HepG2 (cell line): ENCODE measurements at regions of chr1 and their contacts with region 1.

Region 1: GRCh38 chr1:39816415-39817090 is 27.9 kb upstream of the BMP8B start:
- DNase-seq: peak; percentile 49
- ATAC-seq: peak; percentile 82
- H3K4me3 ChIP-seq: no peak overlapping the region
- H3K27ac ChIP-seq: no peak overlapping the region
- H3K4me1 ChIP-seq: peaks cover 10% of the 10 kb centered on the region; the same call in 1 of the 2 replicates
- H3K27me3 ChIP-seq: peaks cover 1 to 13% of the 10 kb centered on the region in 2 experiments; a peak in 2 of 5 replicates
- CTCF ChIP-seq: peak; percentile 92
- EP300 ChIP-seq: no peak
- POLR2A ChIP-seq: no peak
- RAD21 ChIP-seq: peak; percentile 91

Region 2: DNA sequence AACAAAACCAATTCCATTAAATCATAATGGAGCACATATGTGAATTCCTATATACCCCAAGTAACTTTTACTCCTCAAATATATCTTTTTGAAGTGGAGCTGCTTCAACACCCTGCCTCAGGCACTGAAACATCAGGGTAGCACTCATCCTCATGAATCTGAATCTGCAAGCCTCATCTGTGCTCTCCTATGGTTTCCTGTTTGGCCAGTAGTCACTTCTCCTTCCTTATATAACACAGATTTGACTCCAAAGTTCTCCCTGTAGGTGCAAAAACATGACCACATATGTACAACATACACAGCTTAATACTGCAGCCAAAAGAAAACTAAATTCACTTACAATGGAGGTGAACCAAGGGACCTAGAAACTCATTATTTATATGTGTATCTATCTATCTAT is 59.6 kb after region 1 on chr1:
- CTCF ChIA-PET with region 1: no interaction called
- POLR2A ChIA-PET with region 1: no interaction called
- in situ Hi-C with region 1: no loop called
- intact Hi-C with region 1: no loop called
- DNase-seq: no peak
- ATAC-seq: no peak
- H3K4me3 ChIP-seq: no peak overlapping the region
- H3K27ac ChIP-seq: no peak overlapping the region
- H3K4me1 ChIP-seq: peaks cover 59% of the 10 kb centered on the region
- H3K27me3 ChIP-seq: no peaks in the 10 kb centered on the region
- CTCF ChIP-seq: no peak
- EP300 ChIP-seq: no peak
- POLR2A ChIP-seq: no peak
- RAD21 ChIP-seq: no peak

Region 3: DNA sequence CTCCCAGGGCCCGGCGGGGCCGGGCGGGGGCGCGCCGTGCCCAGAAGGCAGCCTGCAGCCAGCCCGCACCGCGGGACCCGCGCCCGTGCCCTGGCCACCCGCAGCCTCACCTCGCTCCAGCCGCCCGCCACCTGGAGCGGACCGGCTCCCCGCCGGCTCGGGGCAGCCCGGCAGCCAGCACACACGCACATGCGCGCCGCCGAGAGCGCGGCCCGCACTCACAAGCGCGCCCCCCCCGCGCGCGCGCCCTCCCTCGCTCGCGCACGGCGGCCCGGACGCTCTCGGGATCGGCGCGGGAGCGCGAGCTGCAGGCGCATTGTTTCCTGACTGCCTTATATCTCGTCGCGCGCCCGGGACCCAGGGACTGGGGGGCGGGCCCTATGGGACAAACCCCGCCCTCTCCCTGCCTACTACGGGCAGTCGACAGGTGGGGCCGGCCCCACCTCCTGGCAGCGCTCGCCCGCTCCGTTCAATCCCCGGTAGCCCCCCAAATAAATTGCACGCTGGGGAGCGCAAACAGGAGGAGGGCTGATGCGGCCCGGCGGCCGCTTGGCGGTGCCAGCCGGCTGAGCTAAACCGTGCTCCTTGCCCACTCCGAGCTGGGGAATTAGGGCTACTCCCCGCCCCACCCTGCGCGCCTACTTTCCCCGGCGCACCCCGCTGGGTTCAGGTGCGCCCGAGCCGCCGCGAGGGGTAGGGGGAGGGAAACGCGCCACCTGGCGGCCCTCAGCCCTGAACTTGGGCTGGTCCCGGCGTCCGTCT is 85.3 kb after region 1 on chr1 and contains the start of gene MYCL:
- CTCF ChIA-PET with region 1: interaction called, 44 read pairs
- POLR2A ChIA-PET with region 1: interaction called, 7 read pairs
- in situ Hi-C with region 1: loop called (anchors 5 kb)
- intact Hi-C with region 1: loop called (anchors 1 kb)
- DNase-seq: peak; percentile 64
- ATAC-seq: peak; percentile 69
- H3K4me3 ChIP-seq: peak within 1 kb of the TSS; percentile 60 to 85 (median 64)
- H3K27ac ChIP-seq: no peak within 1 kb of the TSS
- H3K4me1 ChIP-seq: peaks cover 50% of the 10 kb centered on the region
- H3K27me3 ChIP-seq: peaks cover 0 to 34% of the 10 kb centered on the region in 2 experiments; a peak in 3 of 5 replicates
- CTCF ChIP-seq: peak; percentile 94
- EP300 ChIP-seq: no peak
- POLR2A ChIP-seq: no peak
- RAD21 ChIP-seq: peak; percentile 72
- total RNA-seq, gene MYCL: 0.31 and 0.42 TPM in 2 replicates

Region 4: GRCh38 chr1:39973503-39974135 is 157.1 kb after region 1 on chr1:
- CTCF ChIA-PET with region 1: interaction called, 4 read pairs
- POLR2A ChIA-PET with region 1: no interaction called
- in situ Hi-C with region 1: loop called (anchors 5 kb)
- intact Hi-C with region 1: no loop called
- DNase-seq: peak; percentile 49
- ATAC-seq: peak; percentile 83
- H3K4me3 ChIP-seq: no peak overlapping the region
- H3K27ac ChIP-seq: no peak overlapping the region
- H3K4me1 ChIP-seq: peaks cover 8% of the 10 kb centered on the region; the same call in 1 of the 2 replicates
- H3K27me3 ChIP-seq: peaks cover 0 to 3% of the 10 kb centered on the region in 2 experiments; a peak in 1 of 5 replicates
- CTCF ChIP-seq: peak; percentile 96
- EP300 ChIP-seq: no peak
- POLR2A ChIP-seq: no peak
- RAD21 ChIP-seq: peak; percentile 91